ENCODE measurements at regions of chr4 and their contacts with region 1.

Region 1: DNA sequence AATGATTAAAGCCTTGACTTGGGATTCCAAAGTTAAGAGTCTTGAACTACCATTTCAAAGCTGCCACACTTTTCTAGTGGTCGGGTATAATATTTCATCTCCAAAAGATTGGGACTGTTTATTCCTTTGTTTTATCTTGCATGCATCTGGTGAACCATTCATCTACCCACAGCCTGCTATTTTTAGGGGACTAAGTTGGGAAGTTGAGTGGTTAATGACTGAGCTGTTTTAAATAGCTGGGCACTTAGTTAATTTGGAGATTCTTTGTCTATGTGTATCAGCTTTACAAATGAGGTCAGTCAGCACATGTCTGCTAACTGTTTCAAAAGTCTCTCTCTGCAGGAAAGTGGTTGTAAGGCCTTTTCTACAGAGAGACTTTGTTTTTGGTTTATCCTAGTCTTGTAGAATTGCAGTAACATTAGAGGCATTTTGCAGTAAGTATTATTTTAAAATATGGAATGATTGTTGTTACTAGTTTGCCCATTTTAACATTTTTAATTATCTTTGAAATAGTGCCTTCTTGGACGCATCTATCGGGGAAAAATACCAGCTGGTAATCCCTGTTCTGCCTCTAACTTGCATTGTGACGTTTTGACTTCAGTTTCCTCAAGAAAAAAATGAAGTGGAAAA is 8.2 kb downstream of the BMP2K start:
- DNase-seq: no peak
- ATAC-seq: no peak
- H3K4me3 ChIP-seq: no peak overlapping the region
- H3K4me3 Mint-ChIP-seq: no peak overlapping the region
- H3K27ac ChIP-seq: no peak overlapping the region
- H3K27ac Mint-ChIP-seq: no peak overlapping the region
- H3K4me1 ChIP-seq: no peaks in the 10 kb centered on the region
- H3K4me1 Mint-ChIP-seq: peaks cover 21% of the 10 kb centered on the region
- H3K27me3 ChIP-seq: no peaks in the 10 kb centered on the region
- H3K27me3 Mint-ChIP-seq: no peaks in the 10 kb centered on the region
- CTCF ChIP-seq: no peak

Region 2: DNA sequence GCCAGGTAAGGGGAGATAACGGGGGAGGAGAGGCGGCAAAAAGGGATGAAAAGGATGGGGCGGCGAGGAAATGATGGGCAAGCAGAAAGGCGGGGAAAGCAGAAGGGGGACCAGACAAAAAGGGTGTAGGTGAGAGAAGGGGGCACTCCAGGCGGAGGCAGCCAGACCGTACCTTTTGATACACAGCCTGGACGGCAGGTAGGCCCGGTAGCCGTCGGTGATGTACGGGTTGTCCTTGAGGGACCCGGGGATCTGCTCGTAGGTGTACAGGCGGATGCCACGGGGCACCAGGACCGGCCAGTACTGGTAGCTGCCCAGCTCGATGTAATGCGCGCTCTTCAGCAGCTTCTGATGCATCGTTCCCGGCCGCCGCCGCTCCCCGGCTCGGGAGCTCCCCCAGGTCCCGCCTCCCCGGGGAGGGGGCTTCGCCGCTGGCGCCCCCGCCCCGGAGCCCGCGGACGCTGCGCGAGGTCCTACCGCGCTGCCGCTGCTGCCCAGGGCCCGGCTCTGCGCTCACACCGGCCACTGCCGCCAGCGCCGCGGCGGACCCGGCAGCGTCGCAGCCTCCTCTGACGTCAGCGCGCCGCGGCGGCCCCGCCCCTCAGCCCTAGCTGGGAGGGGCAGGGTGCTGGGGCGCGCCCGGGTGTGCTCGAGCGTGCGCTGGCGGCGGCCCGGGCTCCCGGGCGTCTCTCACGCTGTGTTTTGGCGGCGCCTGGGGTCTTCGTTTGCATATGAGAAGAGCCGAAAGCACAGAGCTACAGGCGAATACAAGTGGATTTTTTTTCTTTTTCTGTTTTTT is 154.7 kb after region 1 on chr4 and contains the start of gene PAQR3:
- CTCF ChIA-PET with region 1: no interaction called
- POLR2A ChIA-PET with region 1: no interaction called
- intact Hi-C with region 1: loop called (anchors 5 kb)
- DNase-seq: peak; percentile 73 to 94 (median 82)
- ATAC-seq: peak; percentile 96
- H3K4me3 ChIP-seq: peak within 1 kb of the TSS; percentile 87
- H3K4me3 Mint-ChIP-seq: peak within 1 kb of the TSS; percentile 93
- H3K27ac ChIP-seq: no peak within 1 kb of the TSS
- H3K27ac Mint-ChIP-seq: peak within 1 kb of the TSS; percentile 82
- H3K4me1 ChIP-seq: peaks cover 24% of the 10 kb centered on the region
- H3K4me1 Mint-ChIP-seq: peaks cover 44% of the 10 kb centered on the region
- H3K27me3 ChIP-seq: no peaks in the 10 kb centered on the region
- H3K27me3 Mint-ChIP-seq: peaks cover 13% of the 10 kb centered on the region
- CTCF ChIP-seq: no peak
- total RNA-seq, gene PAQR3: 29.5 to 30.7 TPM